ENCODE measurements at regions of chr13 and their contacts with region 1.

Region 1: GRCh38 chr13:24313439-24313838 is 4.1 kb downstream of the C1QTNF9 start:
- ATAC-seq: peak in 3 of 8 experiments; percentile 78 to 91 (median 82)
- H3K4me3 ChIP-seq: no peak overlapping the region
- H3K27ac ChIP-seq: no peak overlapping the region
- H3K4me1 ChIP-seq: no peaks in the 10 kb centered on the region

Region 2: GRCh38 chr13:24540236-24541126 is 227.0 kb after region 1 on chr13:
- in situ Hi-C with region 1: loop called in 1 of 9 experiments (anchors 25 kb)
- ATAC-seq: peak; percentile 34 to 76 (median 54)
- H3K4me3 ChIP-seq: no peak overlapping the region
- H3K27ac ChIP-seq: no peak overlapping the region
- H3K4me1 ChIP-seq: peaks cover 0 to 2% of the 10 kb centered on the region in 2 donors

Measured in motor neuron (in vitro differentiated cells).